ENCODE measurements at regions of chr4 and their contacts with region 1.

Region 1: DNA sequence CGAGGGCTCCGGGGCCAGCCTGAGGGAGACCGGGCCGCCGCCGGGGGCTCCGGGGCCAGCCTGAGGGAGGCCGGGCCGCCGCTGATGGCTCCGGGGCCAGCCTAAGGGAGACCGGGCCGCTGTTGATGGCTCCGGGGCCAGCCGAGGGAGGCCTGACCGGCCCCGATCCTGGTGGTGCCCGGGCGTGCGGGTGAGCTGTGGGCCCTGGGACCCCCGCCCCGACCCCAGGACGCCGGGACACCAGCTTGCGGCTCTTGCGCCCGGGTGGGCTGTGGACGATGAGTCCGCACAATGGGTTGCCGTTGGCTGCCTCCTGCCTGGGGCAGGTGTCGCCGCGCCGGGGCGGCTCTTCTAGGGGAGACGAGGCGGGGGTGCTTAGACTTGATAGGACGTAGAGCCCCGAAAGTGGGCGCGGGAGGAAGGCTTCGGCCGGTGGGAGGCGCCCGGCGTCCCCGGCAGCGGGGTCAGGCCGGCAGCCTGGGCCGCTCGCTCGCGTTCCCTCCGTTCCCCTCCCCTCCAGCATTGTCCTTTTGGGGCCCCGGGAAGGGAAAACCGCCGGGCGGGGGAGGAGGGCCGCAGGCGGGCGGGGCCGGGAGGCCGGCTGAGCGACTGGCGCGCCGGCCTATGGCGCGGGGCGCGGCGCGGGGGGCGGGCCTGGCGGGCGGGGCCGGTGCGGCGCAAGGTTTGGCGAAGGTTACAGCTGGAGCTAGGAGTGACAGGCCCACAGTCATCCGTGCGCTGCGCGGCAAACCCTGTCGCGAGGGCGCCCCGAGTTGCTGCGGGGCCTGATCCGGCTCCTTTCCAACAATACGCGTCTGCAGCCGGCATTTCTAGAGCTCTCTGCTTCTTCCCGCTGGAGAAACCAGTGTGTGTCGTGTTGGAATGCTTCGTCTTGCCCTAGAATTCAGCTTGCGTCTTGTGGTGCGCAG is 790 bp downstream of the KIAA0232 start:
- DNase-seq: peak; percentile 93 to 95
- ATAC-seq: peak; percentile 81 to 86 (median 84)
- H3K4me3 ChIP-seq: peak overlapping the region; percentile 93
- H3K27ac ChIP-seq: peak overlapping the region; percentile 99
- H3K4me1 ChIP-seq: peaks cover 62% of the 10 kb centered on the region
- H3K27me3 ChIP-seq: no peaks in the 10 kb centered on the region
- CTCF ChIP-seq: no peak

Region 2: GRCh38 chr4:6834867-6835266 is 51.5 kb after region 1 on chr4:
- intact Hi-C with region 1: loop called in 1 of 2 experiments (anchors 5 kb)
- DNase-seq: peak; percentile 55 to 81
- ATAC-seq: peak; percentile 98 to 100 (median 100)
- H3K4me3 ChIP-seq: no peak overlapping the region
- H3K27ac ChIP-seq: peak overlapping the region; percentile 89
- H3K4me1 ChIP-seq: peaks cover 34% of the 10 kb centered on the region
- H3K27me3 ChIP-seq: no peaks in the 10 kb centered on the region
- CTCF ChIP-seq: no peak

Region 3: GRCh38 chr4:6845027-6845426 is 61.7 kb after region 1 on chr4:
- intact Hi-C with region 1: no loop called
- DNase-seq: no peak
- ATAC-seq: no peak
- H3K4me3 ChIP-seq: no peak overlapping the region
- H3K27ac ChIP-seq: peak overlapping the region; percentile 74
- H3K4me1 ChIP-seq: peaks cover 60% of the 10 kb centered on the region
- H3K27me3 ChIP-seq: no peaks in the 10 kb centered on the region
- CTCF ChIP-seq: no peak

Region 4: GRCh38 chr4:6855692-6856297 is 72.5 kb after region 1 on chr4:
- intact Hi-C with region 1: loop called in 1 of 2 experiments (anchors 5 kb)
- DNase-seq: no peak
- ATAC-seq: peak; percentile 92 to 93 (median 92)
- H3K4me3 ChIP-seq: peak overlapping the region; percentile 60
- H3K27ac ChIP-seq: peak overlapping the region; percentile 87
- H3K4me1 ChIP-seq: peaks cover 44% of the 10 kb centered on the region
- H3K27me3 ChIP-seq: no peaks in the 10 kb centered on the region
- CTCF ChIP-seq: no peak

Region 5: GRCh38 chr4:6873792-6874461 is 90.6 kb after region 1 on chr4:
- intact Hi-C with region 1: loop called (anchors 5 kb)
- DNase-seq: peak; percentile 70 to 85
- ATAC-seq: peak; percentile 44 to 62 (median 52)
- H3K4me3 ChIP-seq: no peak overlapping the region
- H3K27ac ChIP-seq: peak overlapping the region; percentile 79
- H3K4me1 ChIP-seq: peaks cover 56% of the 10 kb centered on the region
- H3K27me3 ChIP-seq: no peaks in the 10 kb centered on the region
- CTCF ChIP-seq: peak; percentile 75

Measured in psoas muscle (tissue), 8 donors.